ENCODE measurements at regions of chr19 and their contacts with region 1.

Region 1: GRCh38 chr19:16324384-16325160 is at the start of gene KLF2:
- DNase-seq: peak; percentile 99
- total RNA-seq, gene KLF2: 97.8 to 208 TPM

Region 2: DNA sequence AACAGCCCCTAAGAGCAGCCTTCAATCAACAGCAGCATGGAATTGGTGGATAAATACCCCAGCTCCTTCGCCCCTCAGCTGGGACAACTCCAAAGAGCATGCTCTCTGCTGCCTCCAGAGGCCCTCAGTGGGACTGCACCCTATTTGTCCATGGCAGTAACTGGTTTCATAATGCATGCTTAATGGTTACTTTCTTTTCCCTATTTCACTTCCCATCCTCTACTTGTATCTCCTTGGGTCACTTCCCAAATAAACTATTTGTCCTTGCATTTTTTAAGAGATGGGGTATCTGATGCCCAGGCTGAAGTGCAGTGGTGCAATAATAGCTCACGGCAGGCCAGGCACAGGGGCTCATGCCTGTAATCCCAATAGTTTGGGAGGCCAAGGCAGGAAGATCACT is 261.8 kb before region 1 on chr19:
- intact Hi-C with region 1: loop called in 1 of 2 experiments (anchors 10 kb)
- DNase-seq: peak; percentile 89

Region 3: DNA sequence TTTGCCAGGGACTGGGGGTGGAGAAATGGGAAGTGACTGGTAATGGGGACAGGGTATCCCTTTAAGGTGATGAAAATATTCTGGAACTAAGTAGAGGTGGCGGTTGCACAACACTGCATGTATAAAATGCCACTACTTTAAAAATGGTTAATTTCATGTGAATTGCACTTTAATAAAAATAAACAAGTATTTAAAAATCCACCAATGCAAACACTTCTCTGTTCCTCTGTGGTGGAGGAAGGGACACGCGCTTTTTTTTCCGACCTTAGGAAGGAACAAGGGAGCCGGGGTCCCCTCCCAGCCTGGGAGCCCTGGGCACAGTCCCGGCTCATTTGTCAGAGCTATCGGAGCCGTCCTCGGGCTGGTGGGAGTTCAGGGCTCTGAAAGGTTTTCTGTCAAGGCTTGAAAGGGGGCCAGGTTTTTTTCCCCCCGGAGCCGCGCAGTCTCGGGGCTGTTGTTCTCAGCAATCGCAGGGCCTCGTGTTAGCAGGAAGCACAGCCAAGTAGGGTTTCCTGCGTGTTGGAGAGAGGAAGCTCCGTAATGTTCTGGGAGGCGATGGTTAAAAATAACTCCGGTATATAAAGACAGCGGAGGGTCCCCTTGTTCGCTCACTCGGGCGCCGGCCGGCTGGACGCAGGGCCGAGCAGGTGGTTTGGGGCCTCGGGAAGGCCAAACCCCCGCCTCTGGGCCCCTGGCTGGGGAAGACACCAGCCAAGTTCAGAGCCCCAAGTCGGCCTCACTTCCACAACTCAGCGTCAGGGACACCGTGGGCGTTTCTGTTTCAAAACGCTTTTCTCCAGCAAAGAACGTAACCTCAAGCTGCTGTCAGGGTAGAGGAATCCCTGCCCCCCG is 41.1 kb before region 1 on chr19:
- intact Hi-C with region 1: loop called (anchors 1 to 5 kb)
- DNase-seq: peak; percentile 95